ENCODE measurements at regions of chr13 and their contacts with region 1.

Region 1: GRCh38 chr13:114110091-114110829 is 22.2 kb downstream of the RASA3 start:
- DNase-seq: peak; percentile 87 to 90 (median 89)
- H3K4me3 ChIP-seq: peak overlapping the region in 1 of 3 experiments; percentile 42
- H3K4me3 Mint-ChIP-seq: peak overlapping the region; percentile 34 to 84
- H3K27ac ChIP-seq: peak overlapping the region; percentile 1 to 64
- H3K27ac Mint-ChIP-seq: peak overlapping the region in 5 of 7 donors; percentile 58 to 87 (median 73)
- H3K4me1 ChIP-seq: peaks cover 39% of the 10 kb centered on the region in 2 donors
- H3K4me1 Mint-ChIP-seq: peaks cover 42% of the 10 kb centered on the region
- H3K27me3 ChIP-seq: no peaks in the 10 kb centered on the region
- H3K27me3 Mint-ChIP-seq: peaks cover 0 to 4% (median 3%) of the 10 kb centered on the region in 3 donors
- CTCF ChIP-seq: peak; percentile 74

Region 2: DNA sequence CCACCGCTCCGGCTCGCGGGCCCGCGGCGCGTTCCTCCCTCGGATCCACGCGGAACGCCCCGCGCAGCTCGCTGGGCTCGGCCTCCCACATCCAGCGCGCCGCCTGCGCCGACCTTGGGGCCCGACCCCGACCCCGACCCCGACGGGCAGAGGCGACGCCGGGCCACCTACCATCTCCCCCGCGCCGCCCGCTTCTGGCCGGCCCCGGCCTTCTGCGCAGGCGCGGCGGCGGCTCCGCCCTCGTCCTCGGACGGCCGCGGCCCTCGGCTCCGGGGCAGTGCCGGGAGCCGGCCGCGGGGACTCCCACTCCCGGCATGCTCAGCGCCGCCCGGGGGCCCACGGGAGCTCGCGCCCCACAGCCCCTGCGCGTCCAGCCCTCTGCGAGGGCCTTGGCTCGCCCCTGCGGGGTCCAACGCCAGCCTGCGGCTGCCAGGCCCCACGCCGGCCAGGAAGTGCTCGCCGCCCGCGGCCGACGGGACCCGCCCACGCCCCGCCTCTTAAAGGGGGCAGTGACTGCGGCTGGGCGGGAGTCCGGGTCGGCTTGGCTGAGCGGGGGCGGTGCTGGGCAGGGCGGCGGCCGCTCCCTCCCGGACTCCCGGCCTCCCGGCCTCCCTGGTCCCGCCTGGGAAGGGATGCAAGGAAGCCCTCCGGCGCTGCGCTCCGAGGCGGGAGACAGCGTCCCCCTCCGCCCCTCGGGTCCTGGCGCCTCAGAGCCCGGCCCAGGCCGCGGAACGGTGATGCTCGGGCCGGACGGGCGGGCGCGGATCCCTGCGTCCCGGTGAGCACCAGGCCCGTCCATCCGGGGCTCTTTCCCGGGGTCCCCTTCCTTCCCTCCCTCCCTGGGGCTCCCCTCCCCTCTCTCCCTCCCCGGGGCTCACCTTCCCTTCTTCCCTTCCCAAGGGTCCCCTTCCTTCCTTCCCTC is 619.5 kb before region 1 on chr13 and contains the start of gene DCUN1D2:
- intact Hi-C with region 1: no loop called
- DNase-seq: peak; percentile 86 to 90 (median 88)
- H3K4me3 ChIP-seq: peak within 1 kb of the TSS; percentile 83 to 91 (median 88)
- H3K4me3 Mint-ChIP-seq: peak within 1 kb of the TSS; percentile 90 to 96
- H3K27ac ChIP-seq: peak within 1 kb of the TSS; percentile 73 to 94
- H3K27ac Mint-ChIP-seq: peak within 1 kb of the TSS; percentile 66 to 96 (median 88)
- H3K4me1 ChIP-seq: peaks cover 51 to 52% of the 10 kb centered on the region in 2 donors
- H3K4me1 Mint-ChIP-seq: peaks cover 60% of the 10 kb centered on the region
- H3K27me3 ChIP-seq: no peaks in the 10 kb centered on the region
- H3K27me3 Mint-ChIP-seq: peaks cover 0 to 1% (median 0%) of the 10 kb centered on the region in 3 donors
- CTCF ChIP-seq: no peak
- polyA plus RNA-seq, gene DCUN1D2: 3.1 to 16.7 (median 6.1) TPM

Region 3: DNA sequence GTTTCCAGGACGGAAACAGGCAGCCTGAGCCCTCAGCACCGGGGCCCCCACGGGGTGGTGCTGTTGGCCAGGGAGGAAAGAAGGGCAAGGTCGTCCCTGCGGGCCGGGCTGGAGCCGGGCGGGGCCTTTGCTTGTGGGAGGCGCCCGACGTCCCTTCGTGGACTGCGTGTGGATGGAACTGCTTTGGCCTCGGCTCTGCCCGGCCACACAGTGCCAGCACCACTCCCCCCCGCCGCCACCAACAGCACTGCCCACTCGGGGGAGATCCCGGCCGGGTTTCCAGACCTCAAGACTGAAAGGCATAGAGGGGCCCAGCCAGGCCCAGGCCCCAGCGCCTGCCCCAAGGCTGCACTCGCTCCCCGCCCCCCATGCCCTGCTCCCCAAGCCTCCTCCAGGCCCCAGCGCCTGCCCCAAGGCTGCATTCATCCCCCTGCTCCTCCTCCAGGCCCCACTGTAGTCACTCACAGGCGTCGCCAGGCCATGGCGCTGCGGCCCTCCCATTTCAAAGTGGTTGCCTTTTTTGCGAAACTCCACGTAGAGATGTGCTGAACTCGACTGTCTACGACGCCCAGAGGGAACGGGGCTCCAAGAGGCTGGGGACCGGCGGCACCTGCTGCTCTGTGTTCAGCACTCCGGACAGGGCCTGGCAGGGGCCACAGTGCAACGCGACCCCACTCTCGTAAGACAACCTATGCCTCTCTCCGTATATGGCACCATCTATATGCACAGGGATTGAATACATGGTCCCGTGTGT is 158.8 kb before region 1 on chr13:
- intact Hi-C with region 1: loop called in 1 of 2 experiments (anchors 10 kb)
- DNase-seq: peak; percentile 71 to 74 (median 73)
- H3K4me3 ChIP-seq: peak overlapping the region in 1 of 3 experiments; percentile 50
- H3K4me3 Mint-ChIP-seq: peak overlapping the region; percentile 56 to 63
- H3K27ac ChIP-seq: no peak overlapping the region
- H3K27ac Mint-ChIP-seq: no peak overlapping the region
- H3K4me1 ChIP-seq: peaks cover 9 to 10% of the 10 kb centered on the region in 2 donors
- H3K4me1 Mint-ChIP-seq: peaks cover 16% of the 10 kb centered on the region
- H3K27me3 ChIP-seq: peaks cover 0 to 2% of the 10 kb centered on the region in 2 donors
- H3K27me3 Mint-ChIP-seq: peaks cover 0 to 12% (median 2%) of the 10 kb centered on the region in 3 donors
- CTCF ChIP-seq: peak; percentile 69

Region 4: DNA sequence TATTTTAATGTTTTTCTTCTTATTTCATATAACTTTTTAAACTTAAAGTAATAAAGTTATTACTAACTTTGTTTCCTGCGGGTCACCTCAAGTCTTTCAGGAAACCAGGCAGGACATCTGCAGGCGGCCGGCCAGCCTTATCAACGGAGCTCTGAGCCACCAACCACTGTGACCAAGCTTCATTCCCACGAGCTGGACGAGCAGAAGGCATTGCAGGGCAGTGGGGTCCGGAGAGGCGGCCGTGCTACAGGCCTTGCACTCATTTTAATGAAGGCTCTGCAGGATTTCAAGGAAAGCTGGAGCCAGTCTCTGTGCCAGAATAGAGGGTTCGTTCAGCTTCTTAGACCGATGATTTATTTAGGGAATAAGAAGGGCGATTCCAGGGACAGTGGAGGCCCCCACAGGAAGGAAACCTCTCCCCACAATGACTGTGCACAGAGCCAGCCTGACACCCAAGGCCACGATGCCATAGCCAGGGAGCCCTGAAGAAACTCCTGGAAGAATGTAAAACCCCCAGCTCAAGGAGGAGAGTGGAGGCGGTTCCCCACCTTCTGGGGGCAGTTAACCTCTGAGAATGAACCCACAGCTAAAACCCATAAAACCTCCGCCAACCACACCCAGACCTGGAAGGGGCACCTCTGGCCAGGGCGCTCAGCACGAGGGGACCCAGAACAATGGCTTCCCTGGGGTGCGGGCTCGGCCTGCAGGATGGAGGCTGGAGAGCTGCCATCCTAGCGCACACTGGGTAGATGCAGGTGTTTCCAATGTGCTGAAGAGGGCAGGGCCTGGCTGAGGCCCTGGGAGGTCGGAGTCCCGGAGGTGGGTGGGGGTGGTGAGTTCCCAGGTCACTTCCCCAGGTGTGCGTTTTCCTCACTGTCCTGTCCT is 52.9 kb before region 1 on chr13:
- intact Hi-C with region 1: loop called in 1 of 2 experiments (anchors 5 kb)
- DNase-seq: peak in 2 of 3 donors; percentile 40 to 41
- H3K4me3 ChIP-seq: peak overlapping the region in 1 of 3 experiments; percentile 57
- H3K4me3 Mint-ChIP-seq: peak overlapping the region; percentile 37 to 78
- H3K27ac ChIP-seq: peak overlapping the region; percentile 15 to 56
- H3K27ac Mint-ChIP-seq: peak overlapping the region; percentile 13 to 74 (median 63)
- H3K4me1 ChIP-seq: peaks cover 62 to 82% of the 10 kb centered on the region in 2 donors
- H3K4me1 Mint-ChIP-seq: peaks cover 67% of the 10 kb centered on the region
- H3K27me3 ChIP-seq: no peaks in the 10 kb centered on the region
- H3K27me3 Mint-ChIP-seq: peaks cover 0 to 5% (median 0%) of the 10 kb centered on the region in 3 donors
- CTCF ChIP-seq: no peak

Region 5: GRCh38 chr13:114065141-114065925 is 44.9 kb before region 1 on chr13:
- intact Hi-C with region 1: loop called in 1 of 2 experiments (anchors 2 kb)
- DNase-seq: peak; percentile 96 to 98 (median 97)
- H3K4me3 ChIP-seq: peak overlapping the region; percentile 19 to 72 (median 21)
- H3K4me3 Mint-ChIP-seq: peak overlapping the region; percentile 79 to 89
- H3K27ac ChIP-seq: peak overlapping the region; percentile 93 to 99
- H3K27ac Mint-ChIP-seq: peak overlapping the region; percentile 98 to 100 (median 99)
- H3K4me1 ChIP-seq: peaks cover 75 to 84% of the 10 kb centered on the region in 2 donors
- H3K4me1 Mint-ChIP-seq: peaks cover 70% of the 10 kb centered on the region
- H3K27me3 ChIP-seq: no peaks in the 10 kb centered on the region
- H3K27me3 Mint-ChIP-seq: peaks cover 0 to 1% (median 0%) of the 10 kb centered on the region in 3 donors
- CTCF ChIP-seq: no peak

Region 6: DNA sequence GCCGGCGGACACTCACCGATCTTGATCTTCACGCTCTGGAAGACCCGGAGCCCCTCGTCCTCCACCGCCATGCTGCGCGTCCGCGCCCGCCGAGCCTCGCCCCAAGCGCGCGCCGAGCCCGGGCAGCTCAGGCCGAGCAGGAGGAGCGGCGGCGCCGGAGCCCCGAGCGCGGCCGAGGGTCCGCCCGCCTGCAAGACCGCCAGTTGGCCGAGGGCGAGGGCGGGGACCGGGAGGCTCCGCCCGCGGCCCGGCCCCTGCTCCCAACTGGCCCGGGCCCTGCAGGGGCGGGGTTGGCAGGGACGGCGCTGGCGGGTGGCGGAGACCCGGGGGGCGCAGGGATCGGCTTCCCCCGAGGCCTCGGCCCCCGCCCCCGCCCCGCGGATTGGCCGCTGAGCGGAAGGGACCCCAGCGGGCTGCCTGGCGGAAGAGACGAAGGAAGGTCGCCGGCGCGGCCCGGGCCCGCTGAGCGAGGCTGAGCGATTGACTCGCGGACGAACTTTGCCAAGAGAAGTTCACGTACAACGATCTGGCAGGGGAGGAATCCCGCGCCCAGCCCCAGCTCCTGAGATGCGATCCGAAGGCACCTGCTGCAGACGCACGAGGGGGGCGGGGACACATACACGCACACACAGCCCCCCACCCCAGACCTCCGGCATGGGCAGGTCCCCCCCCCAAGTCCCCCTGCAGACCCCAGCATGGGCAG is 22.3 kb after region 1 on chr13 and contains the start of gene RASA3:
- intact Hi-C with region 1: loop called (anchors 2 kb)
- DNase-seq: peak; percentile 44 to 66 (median 51)
- H3K4me3 ChIP-seq: peak within 1 kb of the TSS; percentile 61 to 98 (median 85)
- H3K4me3 Mint-ChIP-seq: peak within 1 kb of the TSS; percentile 100
- H3K27ac ChIP-seq: peak within 1 kb of the TSS; percentile 86 to 95
- H3K27ac Mint-ChIP-seq: peak within 1 kb of the TSS; percentile 89 to 99 (median 97)
- H3K4me1 ChIP-seq: peaks cover 32 to 41% of the 10 kb centered on the region in 2 donors
- H3K4me1 Mint-ChIP-seq: peaks cover 37% of the 10 kb centered on the region
- H3K27me3 ChIP-seq: no peaks in the 10 kb centered on the region
- H3K27me3 Mint-ChIP-seq: peaks cover 0 to 5% (median 4%) of the 10 kb centered on the region in 3 donors
- CTCF ChIP-seq: no peak
- polyA plus RNA-seq, gene RASA3: 9.0 to 32.6 (median 16.6) TPM

Region 7: GRCh38 chr13:114226699-114227323 is 116.6 kb after region 1 on chr13:
- intact Hi-C with region 1: loop called in 1 of 2 experiments (anchors 5 kb)
- DNase-seq: peak; percentile 68 to 80 (median 79)
- H3K4me3 ChIP-seq: no peak overlapping the region
- H3K4me3 Mint-ChIP-seq: no peak overlapping the region
- H3K27ac ChIP-seq: no peak overlapping the region
- H3K27ac Mint-ChIP-seq: peak overlapping the region in 1 of 7 donors; percentile 43
- H3K4me1 ChIP-seq: peaks cover 36 to 40% of the 10 kb centered on the region in 2 donors
- H3K4me1 Mint-ChIP-seq: peaks cover 42% of the 10 kb centered on the region
- H3K27me3 ChIP-seq: no peaks in the 10 kb centered on the region
- H3K27me3 Mint-ChIP-seq: peaks cover 9 to 12% (median 11%) of the 10 kb centered on the region in 3 donors
- CTCF ChIP-seq: peak; percentile 83

Measured in CD14-positive monocyte (primary cell).